Common myeloid progenitor, CD34-positive (primary cell): ENCODE measurements at regions of chr1 and their contacts with region 1.

Region 1: DNA sequence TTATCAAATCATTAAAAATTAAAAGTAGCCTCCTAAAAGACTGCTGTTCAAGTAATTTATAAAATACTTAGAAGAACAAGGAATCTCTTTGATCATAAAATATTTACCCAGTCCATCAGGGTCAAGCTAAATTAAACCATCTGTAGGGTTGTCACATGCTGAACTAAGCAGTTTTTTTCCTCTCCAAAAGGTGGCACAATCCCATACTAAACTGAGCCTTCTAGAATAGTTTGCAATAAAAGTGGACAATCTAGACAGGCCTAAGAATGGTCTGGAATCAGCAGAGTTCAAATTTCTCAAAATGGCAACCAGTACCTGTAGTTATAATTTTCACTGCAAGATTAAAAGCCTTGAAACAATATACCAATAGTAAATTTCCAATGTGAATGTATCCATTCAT is 194.8 kb downstream of the EIF4G3 start:
- DNase-seq: peak; percentile 43 to 52 (median 43)
- H3K4me3 ChIP-seq: no peak overlapping the region
- H3K27ac ChIP-seq: no peak overlapping the region
- H3K4me1 ChIP-seq: peaks cover 0 to 12% (median 0%) of the 10 kb centered on the region in 4 experiments
- H3K27me3 ChIP-seq: no peaks in the 10 kb centered on the region

Region 2: GRCh38 chr1:20956272-20956671 is 25.6 kb before region 1 on chr1:
- CTCF ChIA-PET with region 1: no interaction called
- POLR2A ChIA-PET with region 1: no interaction called
- DNase-seq: no peak
- H3K4me3 ChIP-seq: no peak overlapping the region
- H3K27ac ChIP-seq: no peak overlapping the region
- H3K4me1 ChIP-seq: no peaks in the 10 kb centered on the region
- H3K27me3 ChIP-seq: no peaks in the 10 kb centered on the region

Region 3: GRCh38 chr1:20992322-20993056 is 10.6 kb after region 1 on chr1:
- CTCF ChIA-PET with region 1: interaction called, 12 read pairs
- POLR2A ChIA-PET with region 1: no interaction called
- DNase-seq: peak in 2 of 3 donors; percentile 38 to 49
- H3K4me3 ChIP-seq: peak overlapping the region in 3 of 7 experiments; percentile 10 to 53 (median 29)
- H3K27ac ChIP-seq: peak overlapping the region; percentile 46 to 74
- H3K4me1 ChIP-seq: peaks cover 12 to 42% (median 15%) of the 10 kb centered on the region in 4 experiments
- H3K27me3 ChIP-seq: no peaks in the 10 kb centered on the region

Region 4: GRCh38 chr1:21072721-21073120 is 90.8 kb after region 1 on chr1:
- CTCF ChIA-PET with region 1: interaction called, 10 read pairs
- POLR2A ChIA-PET with region 1: no interaction called
- DNase-seq: peak; percentile 15 to 53 (median 50)
- H3K4me3 ChIP-seq: no peak overlapping the region
- H3K27ac ChIP-seq: no peak overlapping the region
- H3K4me1 ChIP-seq: peaks cover 0 to 20% (median 7%) of the 10 kb centered on the region in 4 experiments
- H3K27me3 ChIP-seq: no peaks in the 10 kb centered on the region

Region 5: GRCh38 chr1:21189906-21190500 is 208.1 kb after region 1 on chr1:
- CTCF ChIA-PET with region 1: interaction called, 97 read pairs
- POLR2A ChIA-PET with region 1: no interaction called
- DNase-seq: no peak
- H3K4me3 ChIP-seq: no peak overlapping the region
- H3K27ac ChIP-seq: no peak overlapping the region
- H3K4me1 ChIP-seq: peaks cover 0 to 2% (median under 1%) of the 10 kb centered on the region in 4 experiments
- H3K27me3 ChIP-seq: no peaks in the 10 kb centered on the region